ENCODE measurements at regions of chr5 and their contacts with region 1.

Region 1: DNA sequence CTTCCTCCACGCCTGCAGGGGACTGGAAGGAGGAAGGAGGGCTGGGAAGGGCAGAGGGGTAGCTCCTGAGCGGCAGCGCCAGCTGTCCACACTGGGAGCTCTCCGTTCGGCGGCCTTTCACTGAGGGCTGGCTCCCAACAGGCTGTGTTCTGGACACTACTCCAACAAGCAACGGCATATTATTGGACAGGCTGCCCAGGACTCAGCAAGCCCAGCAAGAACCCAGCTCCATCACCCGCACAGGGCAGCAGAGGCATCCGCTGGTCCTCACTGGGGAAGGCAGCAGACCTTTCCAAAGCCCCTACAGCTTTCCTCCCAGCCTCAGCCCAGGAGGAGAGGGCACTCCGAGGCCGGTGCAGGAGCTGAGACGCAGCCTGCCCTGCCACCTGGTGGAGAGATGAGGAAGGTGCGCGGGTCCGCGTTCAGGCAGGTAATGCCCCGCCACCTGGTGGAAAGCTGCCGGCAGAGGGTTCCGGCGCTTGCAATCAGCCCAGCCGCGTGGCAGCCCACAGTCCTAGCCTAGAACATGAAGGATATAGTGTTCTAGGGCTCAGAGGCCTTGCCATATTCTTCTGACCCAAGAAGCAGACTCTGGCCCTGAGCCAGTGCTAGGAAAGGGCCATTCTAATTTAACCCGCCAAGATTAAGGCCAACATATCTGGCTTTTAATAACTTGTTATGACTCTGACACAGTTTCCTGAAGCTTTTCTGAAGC is 74.4 kb downstream of the NRG2 start:
- DNase-seq: peak; percentile 43
- ATAC-seq: peak; percentile 97
- H3K4me3 ChIP-seq: no peak overlapping the region
- H3K27ac ChIP-seq: no peak overlapping the region
- H3K4me1 ChIP-seq: peaks cover 10% of the 10 kb centered on the region
- H3K27me3 ChIP-seq: no peaks in the 10 kb centered on the region
- CTCF ChIP-seq: peak; percentile 100; a peak in 5 of 6 replicates
- EP300 ChIP-seq: no peak
- POLR2A ChIP-seq: no peak
- RAD21 ChIP-seq: peak; percentile 97

Region 2: GRCh38 chr5:139787568-139788293 is 181.0 kb before region 1 on chr5:
- CTCF ChIA-PET with region 1: interaction called, 298 read pairs
- POLR2A ChIA-PET with region 1: interaction called, 3 read pairs
- RAD21 ChIA-PET with region 1: interaction called, 131 read pairs
- SMC1A ChIA-PET with region 1: interaction called, 113 read pairs
- in situ Hi-C with region 1: loop called (anchors 5 kb)
- intact Hi-C with region 1: loop called (anchors 1 kb)
- DNase-seq: peak; percentile 26
- ATAC-seq: peak; percentile 93
- H3K4me3 ChIP-seq: peak overlapping the region; percentile 75
- H3K27ac ChIP-seq: no peak overlapping the region
- H3K4me1 ChIP-seq: no peaks in the 10 kb centered on the region
- H3K27me3 ChIP-seq: peaks cover 0 to 1% of the 10 kb centered on the region in 2 experiments; a peak in 3 of 4 replicates
- CTCF ChIP-seq: peak; percentile 92 to 98 (median 95)
- EP300 ChIP-seq: no peak
- POLR2A ChIP-seq: no peak
- RAD21 ChIP-seq: peak; percentile 96

Region 3: GRCh38 chr5:139863855-139864558 is 104.7 kb before region 1 on chr5:
- CTCF ChIA-PET with region 1: interaction called, 129 read pairs
- POLR2A ChIA-PET with region 1: interaction called, 4 read pairs
- RAD21 ChIA-PET with region 1: interaction called, 19 read pairs
- SMC1A ChIA-PET with region 1: interaction called, 16 read pairs
- in situ Hi-C with region 1: no loop called
- intact Hi-C with region 1: loop called (anchors 2 kb)
- DNase-seq: no peak
- ATAC-seq: peak; percentile 91
- H3K4me3 ChIP-seq: no peak overlapping the region
- H3K27ac ChIP-seq: no peak overlapping the region
- H3K4me1 ChIP-seq: peaks cover 8% of the 10 kb centered on the region
- H3K27me3 ChIP-seq: no peaks in the 10 kb centered on the region
- CTCF ChIP-seq: peak; percentile 76 to 85 (median 81)
- EP300 ChIP-seq: no peak
- POLR2A ChIP-seq: no peak
- RAD21 ChIP-seq: peak; percentile 74

Region 4: GRCh38 chr5:139914218-139914807 is 54.4 kb before region 1 on chr5:
- CTCF ChIA-PET with region 1: interaction called, 52 read pairs
- POLR2A ChIA-PET with region 1: no interaction called
- RAD21 ChIA-PET with region 1: interaction called, 9 read pairs
- SMC1A ChIA-PET with region 1: interaction called, 4 read pairs
- in situ Hi-C with region 1: no loop called
- intact Hi-C with region 1: no loop called
- DNase-seq: no peak
- ATAC-seq: no peak
- H3K4me3 ChIP-seq: no peak overlapping the region
- H3K27ac ChIP-seq: no peak overlapping the region
- H3K4me1 ChIP-seq: no peaks in the 10 kb centered on the region
- H3K27me3 ChIP-seq: no peaks in the 10 kb centered on the region
- CTCF ChIP-seq: no peak
- EP300 ChIP-seq: no peak
- POLR2A ChIP-seq: no peak
- RAD21 ChIP-seq: no peak

Region 5: GRCh38 chr5:139985733-139986132 is 17.0 kb after region 1 on chr5:
- CTCF ChIA-PET with region 1: interaction called, 107 read pairs
- POLR2A ChIA-PET with region 1: interaction called, 4 read pairs
- RAD21 ChIA-PET with region 1: interaction called, 25 read pairs
- SMC1A ChIA-PET with region 1: interaction called, 42 read pairs
- in situ Hi-C with region 1: no loop called
- intact Hi-C with region 1: no loop called
- DNase-seq: peak; percentile 20
- ATAC-seq: peak; percentile 67
- H3K4me3 ChIP-seq: no peak overlapping the region
- H3K27ac ChIP-seq: peak overlapping the region; percentile 47
- H3K4me1 ChIP-seq: peaks cover 8% of the 10 kb centered on the region
- H3K27me3 ChIP-seq: no peaks in the 10 kb centered on the region
- CTCF ChIP-seq: no peak
- EP300 ChIP-seq: no peak
- POLR2A ChIP-seq: no peak
- RAD21 ChIP-seq: no peak

Region 6: GRCh38 chr5:140042643-140043500 is 74.2 kb after region 1 on chr5 and contains the start of gene NRG2:
- CTCF ChIA-PET with region 1: interaction called, 123 read pairs
- POLR2A ChIA-PET with region 1: no interaction called
- RAD21 ChIA-PET with region 1: interaction called, 26 read pairs
- SMC1A ChIA-PET with region 1: interaction called, 36 read pairs
- in situ Hi-C with region 1: no loop called
- intact Hi-C with region 1: loop called (anchors 2 kb)
- DNase-seq: no peak
- ATAC-seq: peak; percentile 82
- H3K4me3 ChIP-seq: peak within 1 kb of the TSS; percentile 89
- H3K27ac ChIP-seq: peak within 1 kb of the TSS; percentile 46
- H3K4me1 ChIP-seq: peaks cover 13% of the 10 kb centered on the region; the same call in 1 of the 2 replicates
- H3K27me3 ChIP-seq: no peaks in the 10 kb centered on the region
- CTCF ChIP-seq: peak; percentile 55 to 78 (median 76)
- EP300 ChIP-seq: no peak
- POLR2A ChIP-seq: peak; percentile 48
- RAD21 ChIP-seq: peak; percentile 17; the same call in 1 of the 2 replicates
- polyA plus RNA-seq, gene NRG2: 0.10 to 0.15 TPM

Region 7: DNA sequence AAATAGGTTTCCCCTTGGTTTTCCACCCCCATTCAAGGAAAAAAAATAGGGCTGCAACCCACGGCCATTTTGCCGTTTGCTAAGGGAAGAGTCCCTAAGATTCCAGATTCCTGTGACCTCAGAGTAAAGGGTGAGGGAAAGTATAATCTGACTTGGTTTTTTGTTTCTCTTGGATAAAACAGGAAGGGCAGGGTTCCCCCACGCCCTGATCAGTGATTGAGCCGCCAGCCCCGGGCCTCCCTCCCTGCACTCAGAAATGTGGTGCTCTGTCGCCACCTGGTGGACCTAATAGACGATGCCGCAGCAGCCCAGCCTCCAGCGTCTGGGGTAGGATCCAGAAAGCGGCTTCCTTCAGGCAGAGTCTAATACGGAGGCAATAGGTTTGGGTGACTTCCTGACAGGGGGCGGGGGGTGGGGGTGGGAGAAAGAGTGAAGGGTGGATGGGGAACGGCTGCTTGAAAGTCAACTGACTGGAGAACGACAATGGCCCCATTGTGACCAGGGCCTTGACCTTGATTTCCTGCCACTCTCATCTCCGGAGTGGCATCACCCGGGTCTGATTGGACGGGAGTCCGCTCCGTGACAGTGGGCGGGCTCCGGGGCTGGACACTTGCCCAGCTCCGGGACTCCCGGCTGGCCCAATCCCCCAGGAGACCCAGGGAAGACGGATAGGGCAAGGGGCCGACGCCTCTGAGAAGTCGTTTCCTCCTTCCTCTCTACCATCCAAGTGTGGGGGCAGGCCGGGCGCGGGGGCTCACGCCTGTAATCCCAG is 188.5 kb after region 1 on chr5:
- CTCF ChIA-PET with region 1: interaction called, 10 read pairs
- POLR2A ChIA-PET with region 1: no interaction called
- RAD21 ChIA-PET with region 1: interaction called, 10 read pairs
- SMC1A ChIA-PET with region 1: interaction called, 5 read pairs
- in situ Hi-C with region 1: no loop called
- intact Hi-C with region 1: loop called (anchors 2 kb)
- DNase-seq: peak; percentile 33
- ATAC-seq: peak; percentile 99
- H3K4me3 ChIP-seq: peak overlapping the region; percentile 41; the same call in 1 of the 2 replicates
- H3K27ac ChIP-seq: peak overlapping the region; percentile 24; the same call in 1 of the 2 replicates
- H3K4me1 ChIP-seq: peaks cover 4% of the 10 kb centered on the region
- H3K27me3 ChIP-seq: no peaks in the 10 kb centered on the region; a peak in 1 of 4 replicates
- CTCF ChIP-seq: peak; percentile 88 to 95 (median 94)
- EP300 ChIP-seq: no peak
- POLR2A ChIP-seq: no peak
- RAD21 ChIP-seq: peak; percentile 96

Region 8: GRCh38 chr5:140244525-140245025 is 275.9 kb after region 1 on chr5:
- CTCF ChIA-PET with region 1: no interaction called
- POLR2A ChIA-PET with region 1: no interaction called
- RAD21 ChIA-PET with region 1: no interaction called
- SMC1A ChIA-PET with region 1: no interaction called
- in situ Hi-C with region 1: no loop called
- intact Hi-C with region 1: no loop called
- DNase-seq: no peak
- ATAC-seq: peak; percentile 92
- H3K4me3 ChIP-seq: no peak overlapping the region
- H3K27ac ChIP-seq: no peak overlapping the region
- H3K4me1 ChIP-seq: peaks cover 4% of the 10 kb centered on the region; the same call in 1 of the 2 replicates
- H3K27me3 ChIP-seq: no peaks in the 10 kb centered on the region
- CTCF ChIP-seq: peak; percentile 70 to 90 (median 85); a peak in 5 of 6 replicates
- EP300 ChIP-seq: no peak
- POLR2A ChIP-seq: no peak
- RAD21 ChIP-seq: peak; percentile 84